CD4-positive, alpha-beta T cell (primary cell): ENCODE measurements at regions of chr17 and their contacts with region 1.

Region 1: GRCh38 chr17:29740017-29740416 is 117.3 kb upstream of the CORO6 start:
- DNase-seq: peak in 2 of 14 experiments; percentile 19 to 25
- ATAC-seq: peak; percentile 51
- H3K4me3 ChIP-seq: no peak overlapping the region
- H3K4me3 Mint-ChIP-seq: peak overlapping the region; percentile 42
- H3K27ac ChIP-seq: peak overlapping the region in 1 of 2 donors; percentile 23
- H3K27ac Mint-ChIP-seq: peak overlapping the region; percentile 89
- H3K4me1 ChIP-seq: peaks cover 20% of the 10 kb centered on the region
- H3K4me1 Mint-ChIP-seq: peaks cover 59% of the 10 kb centered on the region
- H3K27me3 ChIP-seq: no peaks in the 10 kb centered on the region
- H3K27me3 Mint-ChIP-seq: no peaks in the 10 kb centered on the region
- CTCF ChIP-seq: no peak

Region 2: DNA sequence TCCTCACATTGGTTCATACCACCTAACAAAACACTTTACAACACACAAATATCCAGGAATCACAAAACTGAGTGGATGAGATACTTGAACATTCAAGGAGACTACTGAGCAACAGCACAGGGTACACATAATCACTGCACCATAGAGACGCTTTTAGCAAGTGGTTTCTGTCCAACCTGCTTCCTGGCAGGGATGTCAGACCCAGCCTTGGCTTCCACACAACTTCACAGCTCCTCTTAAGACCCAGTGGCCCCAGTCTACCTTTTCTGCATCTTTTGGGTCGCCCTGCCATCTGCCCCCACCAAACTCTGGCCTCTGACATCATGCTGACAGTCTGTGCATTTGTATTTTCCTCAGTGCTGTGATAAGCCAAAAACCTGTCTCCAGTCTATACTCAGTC is 111.4 kb before region 1 on chr17:
- CTCF ChIA-PET with region 1: no interaction called
- POLR2A ChIA-PET with region 1: no interaction called
- intact Hi-C with region 1: no loop called
- DNase-seq: no peak
- ATAC-seq: no peak
- H3K4me3 ChIP-seq: no peak overlapping the region
- H3K4me3 Mint-ChIP-seq: no peak overlapping the region
- H3K27ac ChIP-seq: no peak overlapping the region
- H3K27ac Mint-ChIP-seq: peak overlapping the region; percentile 13
- H3K4me1 ChIP-seq: peaks cover 3% of the 10 kb centered on the region
- H3K4me1 Mint-ChIP-seq: peaks cover 28% of the 10 kb centered on the region
- H3K27me3 ChIP-seq: no peaks in the 10 kb centered on the region
- H3K27me3 Mint-ChIP-seq: no peaks in the 10 kb centered on the region
- CTCF ChIP-seq: no peak

Region 3: DNA sequence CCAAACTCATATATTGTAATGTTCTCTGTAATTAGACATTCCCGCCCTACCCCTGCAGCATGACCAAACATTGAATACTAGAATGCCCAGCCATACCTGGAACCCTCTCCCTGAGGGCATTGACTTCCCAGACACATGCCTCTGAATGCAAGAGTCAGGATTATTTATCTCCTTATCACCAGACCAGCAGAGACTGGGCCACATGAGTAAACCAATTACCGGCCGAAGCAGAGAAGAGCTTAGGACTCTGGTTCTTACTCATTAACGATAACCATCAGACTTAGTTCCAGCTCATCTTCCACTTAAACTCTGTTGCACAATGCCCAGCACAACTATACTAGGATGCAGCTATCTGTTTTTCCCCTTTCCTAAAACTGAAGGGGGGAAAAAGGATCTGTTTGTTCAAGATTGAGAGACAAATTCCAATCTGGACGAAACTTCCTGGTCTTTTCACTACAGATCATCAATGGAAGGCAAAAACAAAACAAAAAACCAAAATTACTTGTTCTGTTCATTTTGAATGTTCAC is 29.1 kb before region 1 on chr17:
- CTCF ChIA-PET with region 1: interaction called, 4 read pairs
- POLR2A ChIA-PET with region 1: no interaction called
- intact Hi-C with region 1: loop called in 1 of 2 experiments (anchors 5 kb)
- DNase-seq: peak in 1 of 14 experiments; percentile 23
- ATAC-seq: no peak
- H3K4me3 ChIP-seq: no peak overlapping the region
- H3K4me3 Mint-ChIP-seq: no peak overlapping the region
- H3K27ac ChIP-seq: no peak overlapping the region
- H3K27ac Mint-ChIP-seq: peak overlapping the region; percentile 92
- H3K4me1 ChIP-seq: peaks cover 29% of the 10 kb centered on the region
- H3K4me1 Mint-ChIP-seq: peaks cover 87% of the 10 kb centered on the region
- H3K27me3 ChIP-seq: no peaks in the 10 kb centered on the region
- H3K27me3 Mint-ChIP-seq: no peaks in the 10 kb centered on the region
- CTCF ChIP-seq: no peak